ENCODE measurements at regions of chr13 and their contacts with region 1.

Region 1: GRCh38 chr13:99386911-99387788 is 80.0 kb upstream of the GPR183 start:
- DNase-seq: peak; percentile 81
- H3K4me3 Mint-ChIP-seq: no peak overlapping the region
- H3K27ac Mint-ChIP-seq: no peak overlapping the region
- H3K4me1 Mint-ChIP-seq: peaks cover 52% of the 10 kb centered on the region
- H3K27me3 Mint-ChIP-seq: no peaks in the 10 kb centered on the region

Region 2: GRCh38 chr13:99347911-99348451 is 39.2 kb before region 1 on chr13:
- CTCF ChIA-PET with region 1: interaction called, 12 read pairs
- POLR2A ChIA-PET with region 1: interaction called, 100 read pairs
- DNase-seq: no peak
- H3K4me3 Mint-ChIP-seq: no peak overlapping the region
- H3K27ac Mint-ChIP-seq: no peak overlapping the region
- H3K4me1 Mint-ChIP-seq: peaks cover 47% of the 10 kb centered on the region
- H3K27me3 Mint-ChIP-seq: no peaks in the 10 kb centered on the region

Region 3: DNA sequence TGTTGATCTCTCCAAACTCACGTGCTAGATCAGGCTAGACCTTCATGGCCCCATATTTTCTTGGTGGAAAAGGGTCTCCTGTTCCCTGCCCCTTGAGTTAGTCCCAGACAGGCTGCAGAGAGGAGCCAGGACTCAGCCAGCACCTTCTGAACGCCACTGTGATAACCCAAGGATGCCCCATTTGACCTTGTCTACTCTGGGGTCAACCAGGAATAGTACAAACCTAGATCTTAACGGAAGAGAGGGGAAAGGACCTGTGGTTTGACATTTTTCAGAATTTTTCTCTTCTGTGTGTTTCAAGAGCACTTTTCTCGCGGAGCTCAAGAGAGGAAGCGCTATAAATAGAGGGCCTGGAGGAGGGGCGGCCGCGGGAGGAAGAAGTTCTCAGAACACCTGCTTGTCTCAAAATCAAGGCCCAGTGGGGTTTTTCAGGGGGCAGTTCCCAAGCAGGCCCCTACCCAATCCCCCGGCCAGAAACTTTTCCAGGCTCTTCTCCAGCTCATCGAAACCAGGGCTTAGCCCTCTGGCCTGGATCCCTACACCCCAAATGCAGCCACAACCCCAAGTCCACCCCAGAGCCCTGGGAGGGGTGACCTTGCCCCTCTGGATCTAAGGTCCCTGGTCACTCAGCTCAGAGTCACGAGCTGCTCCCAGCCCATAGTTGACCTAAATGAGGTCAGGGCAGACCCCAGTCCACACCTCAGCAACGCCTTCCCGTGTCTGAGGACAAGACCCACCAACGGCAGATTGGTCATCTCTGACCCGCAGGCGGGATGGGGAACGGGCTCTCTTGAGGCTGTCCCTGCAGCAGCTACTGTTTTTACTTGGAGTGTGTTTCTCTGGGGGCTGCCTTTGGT is 38.6 kb after region 1 on chr13:
- CTCF ChIA-PET with region 1: interaction called, 13 read pairs
- POLR2A ChIA-PET with region 1: interaction called, 7 read pairs
- DNase-seq: peak; percentile 61
- H3K4me3 Mint-ChIP-seq: peak overlapping the region; percentile 34
- H3K27ac Mint-ChIP-seq: peak overlapping the region; percentile 81
- H3K4me1 Mint-ChIP-seq: peaks cover 37% of the 10 kb centered on the region
- H3K27me3 Mint-ChIP-seq: peaks cover 21% of the 10 kb centered on the region

Measured in activated CD4-positive, alpha-beta memory T cell treated with anti-CD3 and anti-CD28 coated beads, Interleukin-2, amount 10 ng/mL, durations not matched to agents 7 days and 5 days (primary cell).